ENCODE measurements at regions of chr12 and their contacts with region 1.

Region 1: GRCh38 chr12:116236148-116236731 is 41.3 kb downstream of the MED13L start:
- DNase-seq: peak; percentile 42 to 50 (median 44)
- H3K4me3 ChIP-seq: no peak overlapping the region
- H3K4me3 Mint-ChIP-seq: peak overlapping the region in 4 of 8 donors; percentile 29 to 72 (median 40)
- H3K27ac ChIP-seq: no peak overlapping the region
- H3K27ac Mint-ChIP-seq: peak overlapping the region in 6 of 7 donors; percentile 19 to 77 (median 62)
- H3K4me1 ChIP-seq: peaks cover 21% of the 10 kb centered on the region
- H3K4me1 Mint-ChIP-seq: peaks cover 28 to 47% (median 35%) of the 10 kb centered on the region in 4 donors
- H3K27me3 ChIP-seq: no peaks in the 10 kb centered on the region
- H3K27me3 Mint-ChIP-seq: no peaks in the 10 kb centered on the region

Region 2: GRCh38 chr12:115998119-115998633 is 238.1 kb before region 1 on chr12:
- CTCF ChIA-PET with region 1: interaction called, 21 read pairs
- POLR2A ChIA-PET with region 1: no interaction called
- intact Hi-C with region 1: loop called (anchors 1 kb)
- DNase-seq: peak in 4 of 5 donors; percentile 34 to 39 (median 36)
- H3K4me3 ChIP-seq: no peak overlapping the region
- H3K4me3 Mint-ChIP-seq: no peak overlapping the region
- H3K27ac ChIP-seq: no peak overlapping the region
- H3K27ac Mint-ChIP-seq: peak overlapping the region in 3 of 7 donors; percentile 22 to 60 (median 46)
- H3K4me1 ChIP-seq: no peaks in the 10 kb centered on the region
- H3K4me1 Mint-ChIP-seq: peaks cover 6 to 17% (median 9%) of the 10 kb centered on the region in 4 donors
- H3K27me3 ChIP-seq: no peaks in the 10 kb centered on the region
- H3K27me3 Mint-ChIP-seq: no peaks in the 10 kb centered on the region

Region 3: GRCh38 chr12:116066381-116067230 is 169.6 kb before region 1 on chr12:
- CTCF ChIA-PET with region 1: interaction called, 7 read pairs
- POLR2A ChIA-PET with region 1: no interaction called
- intact Hi-C with region 1: loop called (anchors 1 kb)
- DNase-seq: peak; percentile 39 to 55 (median 48)
- H3K4me3 ChIP-seq: no peak overlapping the region
- H3K4me3 Mint-ChIP-seq: peak overlapping the region in 2 of 8 donors; percentile 7 to 21
- H3K27ac ChIP-seq: no peak overlapping the region
- H3K27ac Mint-ChIP-seq: peak overlapping the region in 4 of 7 donors; percentile 0 to 75 (median 33)
- H3K4me1 ChIP-seq: peaks cover 13% of the 10 kb centered on the region
- H3K4me1 Mint-ChIP-seq: peaks cover 18 to 50% (median 29%) of the 10 kb centered on the region in 4 donors
- H3K27me3 ChIP-seq: no peaks in the 10 kb centered on the region
- H3K27me3 Mint-ChIP-seq: no peaks in the 10 kb centered on the region

Region 4: DNA sequence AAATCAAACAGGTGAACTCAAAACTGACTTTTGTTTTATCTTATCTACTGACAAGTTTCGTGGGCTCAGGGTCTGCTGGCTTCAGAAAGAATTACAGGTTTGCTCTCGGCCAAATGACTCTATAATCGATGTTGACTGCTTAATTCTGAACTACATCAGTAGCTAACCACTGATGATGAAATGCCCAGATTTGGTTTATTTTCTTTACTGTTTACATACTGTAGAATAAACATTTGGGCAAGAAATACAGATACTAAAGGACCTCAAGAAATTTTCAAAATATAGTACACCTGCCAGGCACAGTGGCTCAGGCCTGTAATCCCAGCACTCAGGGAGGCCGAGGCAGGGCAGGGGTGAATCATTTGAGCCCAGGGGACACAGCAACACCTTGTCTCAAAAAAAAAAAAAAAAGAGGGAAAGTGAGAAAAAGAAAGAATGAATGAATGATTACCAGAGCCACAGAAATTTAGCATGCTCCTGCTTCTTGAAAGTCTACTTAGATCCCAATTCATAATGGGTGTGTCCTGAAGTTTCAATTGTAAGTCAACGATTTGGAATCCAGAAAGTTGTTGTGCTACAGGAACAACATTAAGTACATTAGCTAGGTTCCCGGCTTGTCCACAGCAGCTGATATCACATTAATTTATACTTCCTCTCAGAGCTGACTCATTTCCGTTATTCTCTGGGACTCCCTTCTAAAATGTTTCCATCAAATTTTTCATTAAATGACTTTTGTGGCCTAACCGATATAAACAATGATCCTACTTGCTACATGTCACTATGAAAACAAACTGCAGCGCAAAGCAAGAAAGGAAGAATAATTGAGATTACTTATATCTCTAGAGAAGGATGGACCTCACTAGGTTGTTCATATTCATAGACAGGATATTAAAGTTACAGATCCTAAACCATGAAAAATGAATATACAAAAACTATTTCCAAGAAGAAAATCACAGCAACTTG is 93.0 kb before region 1 on chr12:
- CTCF ChIA-PET with region 1: interaction called, 13 read pairs
- POLR2A ChIA-PET with region 1: interaction called, 5 read pairs
- intact Hi-C with region 1: loop called (anchors 5 kb)
- DNase-seq: no peak
- H3K4me3 ChIP-seq: no peak overlapping the region
- H3K4me3 Mint-ChIP-seq: peak overlapping the region in 7 of 8 donors; percentile 12 to 68 (median 61)
- H3K27ac ChIP-seq: no peak overlapping the region
- H3K27ac Mint-ChIP-seq: peak overlapping the region in 4 of 7 donors; percentile 3 to 43 (median 14)
- H3K4me1 ChIP-seq: peaks cover 34% of the 10 kb centered on the region
- H3K4me1 Mint-ChIP-seq: peaks cover 40 to 56% (median 48%) of the 10 kb centered on the region in 4 donors
- H3K27me3 ChIP-seq: no peaks in the 10 kb centered on the region
- H3K27me3 Mint-ChIP-seq: no peaks in the 10 kb centered on the region

Region 5: DNA sequence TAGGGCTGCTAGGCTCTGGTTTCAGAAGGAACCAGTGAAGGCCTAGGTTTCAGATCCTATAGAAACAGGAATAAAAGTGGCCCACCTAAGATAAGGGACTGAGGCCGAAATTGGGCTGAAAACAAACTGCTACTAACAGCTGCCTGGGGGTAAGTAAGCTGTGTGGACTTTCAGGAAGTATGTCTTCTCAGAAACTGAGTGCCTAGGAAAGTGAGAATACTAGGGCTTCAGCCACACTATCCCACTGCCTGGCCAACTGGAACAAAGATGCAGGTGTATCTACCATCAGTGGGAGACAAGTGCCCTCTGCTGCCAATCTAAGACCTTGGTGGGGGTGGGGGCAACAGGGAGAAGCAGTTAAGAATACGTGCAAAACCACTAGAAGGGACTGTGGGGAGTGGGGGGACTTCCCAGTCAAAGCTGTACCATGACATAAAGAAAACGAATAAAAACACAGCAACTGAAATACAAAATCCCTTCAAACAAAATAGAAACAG is 41.3 kb before region 1 on chr12:
- CTCF ChIA-PET with region 1: interaction called, 5 read pairs
- POLR2A ChIA-PET with region 1: no interaction called
- intact Hi-C with region 1: loop called (anchors 5 kb)
- DNase-seq: peak; percentile 24 to 79 (median 36)
- H3K4me3 ChIP-seq: no peak overlapping the region
- H3K4me3 Mint-ChIP-seq: peak overlapping the region in 3 of 8 donors; percentile 3 to 20 (median 4)
- H3K27ac ChIP-seq: no peak overlapping the region
- H3K27ac Mint-ChIP-seq: peak overlapping the region in 4 of 7 donors; percentile 39 to 73 (median 60)
- H3K4me1 ChIP-seq: peaks cover 52% of the 10 kb centered on the region
- H3K4me1 Mint-ChIP-seq: peaks cover 40 to 78% (median 58%) of the 10 kb centered on the region in 4 donors
- H3K27me3 ChIP-seq: no peaks in the 10 kb centered on the region
- H3K27me3 Mint-ChIP-seq: no peaks in the 10 kb centered on the region

Region 6: GRCh38 chr12:116210131-116210530 is 26.1 kb before region 1 on chr12:
- CTCF ChIA-PET with region 1: no interaction called
- POLR2A ChIA-PET with region 1: no interaction called
- intact Hi-C with region 1: no loop called
- DNase-seq: no peak
- H3K4me3 ChIP-seq: no peak overlapping the region
- H3K4me3 Mint-ChIP-seq: peak overlapping the region in 2 of 8 donors; percentile 13 to 22
- H3K27ac ChIP-seq: no peak overlapping the region
- H3K27ac Mint-ChIP-seq: no peak overlapping the region
- H3K4me1 ChIP-seq: peaks cover 56% of the 10 kb centered on the region
- H3K4me1 Mint-ChIP-seq: peaks cover 47 to 81% (median 53%) of the 10 kb centered on the region in 4 donors
- H3K27me3 ChIP-seq: no peaks in the 10 kb centered on the region
- H3K27me3 Mint-ChIP-seq: no peaks in the 10 kb centered on the region

Region 7: DNA sequence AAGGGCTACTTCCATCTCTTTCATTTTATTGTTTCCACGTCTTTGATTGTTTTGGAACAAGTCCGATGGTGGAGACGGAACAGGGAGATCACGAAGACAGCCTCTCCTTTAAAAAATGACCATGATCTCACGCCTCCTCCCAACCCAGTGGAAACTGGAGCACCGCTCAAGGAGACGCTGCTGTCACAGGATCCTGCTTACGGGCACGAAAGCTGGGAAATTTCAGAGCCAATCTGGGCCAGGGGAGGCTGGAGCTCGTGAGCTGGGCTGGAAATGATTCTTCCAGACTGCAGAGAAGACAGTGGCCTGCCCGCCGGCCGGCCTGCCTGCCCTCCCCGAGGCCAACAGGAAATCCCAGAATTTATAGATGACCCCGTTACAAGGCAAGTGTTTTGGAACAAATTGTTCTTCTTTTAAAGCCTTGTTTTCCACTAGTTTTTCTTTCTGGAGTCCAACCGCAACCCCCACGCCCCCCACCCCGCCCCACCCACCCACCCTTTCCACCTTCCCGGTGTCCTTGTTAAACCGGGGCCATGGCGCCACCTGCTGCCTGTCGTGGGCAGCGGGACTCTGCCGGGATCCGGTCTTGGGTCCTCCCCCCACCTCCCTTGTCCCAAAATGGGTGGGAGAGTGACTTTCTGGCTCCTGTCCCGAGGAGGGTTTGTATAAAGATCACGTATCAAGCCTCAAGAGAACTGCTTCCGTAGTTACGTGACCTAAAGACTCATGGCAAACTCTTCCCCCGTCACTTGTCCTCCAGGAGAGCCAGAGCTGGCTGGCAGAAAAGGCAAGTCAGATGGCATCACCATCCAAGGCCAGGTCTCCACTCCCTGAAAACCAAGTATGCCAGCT is 363.3 kb after region 1 on chr12:
- CTCF ChIA-PET with region 1: interaction called, 15 read pairs
- POLR2A ChIA-PET with region 1: no interaction called
- intact Hi-C with region 1: no loop called
- DNase-seq: peak; percentile 40 to 50 (median 47)
- H3K4me3 ChIP-seq: no peak overlapping the region
- H3K4me3 Mint-ChIP-seq: peak overlapping the region in 1 of 8 donors; percentile 45
- H3K27ac ChIP-seq: no peak overlapping the region
- H3K27ac Mint-ChIP-seq: peak overlapping the region in 1 of 7 donors; percentile 48
- H3K4me1 ChIP-seq: peaks cover 22% of the 10 kb centered on the region
- H3K4me1 Mint-ChIP-seq: peaks cover 15 to 24% (median 18%) of the 10 kb centered on the region in 4 donors
- H3K27me3 ChIP-seq: no peaks in the 10 kb centered on the region
- H3K27me3 Mint-ChIP-seq: no peaks in the 10 kb centered on the region